ENCODE measurements at regions of chr15 and their contacts with region 1.

Region 1: GRCh38 chr15:75903331-75904239 is at the start of gene FBXO22:
- DNase-seq: peak; percentile 84
- ATAC-seq: peak; percentile 95
- H3K4me3 Mint-ChIP-seq: peak within 1 kb of the TSS; percentile 99
- H3K27ac Mint-ChIP-seq: peak within 1 kb of the TSS; percentile 96
- H3K4me1 Mint-ChIP-seq: peaks cover 26% of the 10 kb centered on the region
- H3K27me3 Mint-ChIP-seq: no peaks in the 10 kb centered on the region
- CTCF ChIP-seq: no peak
- total RNA-seq, gene FBXO22: 19.6 and 24.4 TPM in 2 replicates

Region 2: DNA sequence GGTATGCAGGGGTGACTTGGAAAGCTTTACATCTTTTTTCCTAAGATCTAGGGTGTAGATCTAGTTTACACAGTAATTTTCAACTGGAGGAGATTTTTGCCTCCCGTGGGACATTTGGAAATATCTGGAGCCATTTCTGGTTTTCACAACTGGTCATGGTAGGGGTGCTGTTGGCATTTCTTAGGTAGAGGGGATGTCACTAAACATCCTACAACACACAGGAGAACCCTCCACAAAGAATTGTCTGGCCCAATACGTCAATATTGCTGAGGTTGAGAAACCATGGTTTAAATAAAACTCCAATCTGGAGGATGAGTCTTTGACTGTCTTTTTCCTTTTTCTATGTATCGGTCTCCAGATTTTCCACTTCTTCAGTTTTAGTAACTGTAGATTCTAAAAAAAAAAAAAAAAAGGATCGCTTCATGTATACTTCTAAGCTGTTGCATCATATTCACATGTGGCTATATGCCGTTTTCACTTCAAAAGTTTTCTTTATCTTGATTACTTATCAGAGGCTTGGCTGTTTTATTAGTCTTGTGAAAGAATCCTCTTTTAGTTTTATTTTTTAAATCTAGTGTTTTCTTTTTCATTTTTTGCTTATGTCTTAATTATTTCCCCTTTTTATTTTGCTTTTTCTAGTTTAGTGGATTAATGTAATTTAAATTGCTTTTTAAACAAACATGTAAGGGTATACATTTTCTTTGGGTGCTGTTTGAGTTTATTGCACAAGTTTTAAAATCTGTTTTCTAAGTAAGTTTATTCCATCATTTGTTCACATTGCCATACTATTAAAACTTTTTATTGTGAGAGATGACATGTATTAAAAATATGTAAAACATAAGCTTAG is 39.1 kb before region 1 on chr15:
- CTCF ChIA-PET with region 1: no interaction called
- POLR2A ChIA-PET with region 1: interaction called, 3 read pairs
- intact Hi-C with region 1: loop called (anchors 5 kb)
- DNase-seq: no peak
- ATAC-seq: no peak
- H3K4me3 Mint-ChIP-seq: no peak overlapping the region
- H3K27ac Mint-ChIP-seq: no peak overlapping the region
- H3K4me1 Mint-ChIP-seq: peaks cover 38% of the 10 kb centered on the region
- H3K27me3 Mint-ChIP-seq: no peaks in the 10 kb centered on the region
- CTCF ChIP-seq: no peak